ENCODE measurements at regions of chr18 and their contacts with region 1.

Region 1: GRCh38 chr18:63439334-63439733 is 17.1 kb upstream of the VPS4B start:
- DNase-seq: peak; percentile 43 to 61
- H3K4me3 ChIP-seq: no peak overlapping the region
- H3K27ac ChIP-seq: no peak overlapping the region
- H3K4me1 ChIP-seq: no peaks in the 10 kb centered on the region
- H3K27me3 ChIP-seq: no peaks in the 10 kb centered on the region
- CTCF ChIP-seq: peak; percentile 13 to 83 (median 70)
- EP300 ChIP-seq: no peak
- POLR2A ChIP-seq: no peak
- RAD21 ChIP-seq: peak; percentile 86

Region 2: DNA sequence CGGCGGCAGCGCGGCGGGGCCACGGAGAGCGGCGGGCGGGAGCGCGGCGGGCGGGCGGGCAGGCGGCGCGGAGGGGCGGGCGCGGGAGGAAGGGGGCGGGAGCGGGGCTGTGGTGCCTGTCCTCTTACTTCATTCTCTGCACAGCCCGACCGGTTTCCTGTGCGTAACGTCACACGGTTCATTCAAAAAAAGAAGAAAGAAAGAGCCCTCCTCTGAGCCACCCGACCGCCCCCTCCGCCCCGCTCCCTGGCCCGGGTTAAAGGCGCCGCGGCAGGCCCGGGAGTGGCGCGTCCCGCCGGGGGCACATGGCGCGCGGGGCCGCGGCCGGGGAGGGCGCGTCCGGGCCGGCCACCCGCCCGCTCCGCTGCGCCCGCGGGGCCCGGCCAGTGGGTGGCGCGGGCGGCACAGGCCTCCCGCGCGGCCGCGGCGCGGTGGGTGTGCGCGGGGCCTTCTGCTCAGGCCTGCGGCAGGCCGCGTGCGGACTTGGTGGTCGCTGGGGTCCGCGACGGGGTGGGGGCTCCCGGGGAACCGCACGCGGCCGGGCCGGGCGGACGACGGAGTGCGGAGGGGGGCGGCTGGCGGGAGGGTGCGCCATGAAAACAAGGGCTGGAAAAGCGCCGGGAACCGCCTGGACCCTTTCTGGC is 119.2 kb before region 1 on chr18:
- CTCF ChIA-PET with region 1: interaction called, 14 read pairs
- POLR2A ChIA-PET with region 1: no interaction called
- DNase-seq: peak in 1 of 2 experiments; percentile 63
- H3K4me3 ChIP-seq: peak overlapping the region; percentile 43 to 77 (median 62)
- H3K27ac ChIP-seq: no peak overlapping the region
- H3K4me1 ChIP-seq: peaks cover 4 to 10% (median 8%) of the 10 kb centered on the region in 4 experiments; a peak in 4 of 7 replicates
- H3K27me3 ChIP-seq: peaks cover 0 to 37% (median 22%) of the 10 kb centered on the region in 4 experiments; a peak in 6 of 7 replicates
- CTCF ChIP-seq: no peak
- EP300 ChIP-seq: no peak
- POLR2A ChIP-seq: no peak
- RAD21 ChIP-seq: no peak

Region 3: DNA sequence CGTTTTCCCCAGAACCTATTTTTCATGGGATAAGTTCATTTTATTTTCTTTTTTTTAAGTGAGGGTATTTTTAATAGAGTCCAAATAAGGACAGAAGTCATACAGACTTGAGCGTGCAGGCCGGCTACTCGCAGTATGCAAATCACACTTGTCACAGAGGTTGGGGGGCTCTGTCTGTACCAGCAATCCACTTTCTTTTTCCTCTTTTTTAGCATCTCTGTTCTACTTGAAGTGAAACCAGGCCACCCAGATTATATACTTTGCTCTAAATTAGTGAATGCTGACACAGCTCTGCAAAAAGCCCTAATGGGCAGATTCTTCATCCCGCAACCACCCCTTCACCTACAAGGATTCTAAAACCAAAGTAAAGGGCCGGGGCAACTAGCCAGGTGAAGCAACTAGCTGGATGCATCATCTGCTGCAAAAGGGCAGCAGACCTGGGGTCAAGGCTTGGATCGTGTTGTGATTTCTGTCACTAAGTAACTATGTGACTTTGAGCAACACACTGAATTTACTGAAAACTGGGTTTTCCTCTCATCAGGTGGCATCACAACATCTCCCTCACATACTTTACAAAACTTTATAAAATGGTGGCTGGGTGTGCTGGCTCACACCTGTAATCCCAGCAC is 90.7 kb before region 1 on chr18:
- CTCF ChIA-PET with region 1: interaction called, 10 read pairs
- POLR2A ChIA-PET with region 1: no interaction called
- DNase-seq: no peak
- H3K4me3 ChIP-seq: no peak overlapping the region
- H3K27ac ChIP-seq: no peak overlapping the region
- H3K4me1 ChIP-seq: no peaks in the 10 kb centered on the region
- H3K27me3 ChIP-seq: no peaks in the 10 kb centered on the region
- CTCF ChIP-seq: no peak
- EP300 ChIP-seq: no peak
- POLR2A ChIP-seq: no peak
- RAD21 ChIP-seq: no peak

Region 4: GRCh38 chr18:63427558-63427957 is 11.8 kb before region 1 on chr18:
- CTCF ChIA-PET with region 1: interaction called, 12 read pairs
- POLR2A ChIA-PET with region 1: interaction called, 6 read pairs
- DNase-seq: peak in 1 of 2 experiments; percentile 15
- H3K4me3 ChIP-seq: no peak overlapping the region
- H3K27ac ChIP-seq: no peak overlapping the region; the same call in 1 of the 2 replicates
- H3K4me1 ChIP-seq: no peaks in the 10 kb centered on the region
- H3K27me3 ChIP-seq: no peaks in the 10 kb centered on the region
- CTCF ChIP-seq: no peak
- EP300 ChIP-seq: no peak
- POLR2A ChIP-seq: no peak
- RAD21 ChIP-seq: no peak

Region 5: DNA sequence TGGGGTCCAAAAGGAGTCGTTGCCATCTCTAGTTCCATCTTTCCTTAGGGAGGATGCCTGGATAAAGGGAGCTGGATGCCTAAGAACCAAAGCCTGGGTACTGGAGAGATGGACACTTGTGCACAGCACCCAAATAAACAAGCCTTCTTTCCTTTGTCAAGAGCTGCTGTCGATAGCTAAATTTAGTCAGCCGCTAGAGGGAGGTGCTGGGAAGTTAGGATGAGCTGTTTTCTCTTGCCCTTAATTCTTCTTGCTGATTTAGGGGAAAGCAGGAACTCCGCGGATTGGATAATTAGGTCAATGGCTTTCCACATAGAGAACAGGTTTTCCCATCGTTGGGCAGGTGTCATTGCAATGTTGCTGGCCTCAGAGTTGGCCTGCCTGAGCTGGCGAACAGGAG is 72.0 kb after region 1 on chr18:
- CTCF ChIA-PET with region 1: interaction called, 23 read pairs
- POLR2A ChIA-PET with region 1: no interaction called
- DNase-seq: peak; percentile 44 to 68
- H3K4me3 ChIP-seq: peak overlapping the region in 1 of 4 experiments; percentile 20; a peak in 1 of 8 replicates
- H3K27ac ChIP-seq: no peak overlapping the region
- H3K4me1 ChIP-seq: peaks cover 2 to 18% (median 9%) of the 10 kb centered on the region in 4 experiments; a peak in 4 of 7 replicates
- H3K27me3 ChIP-seq: no peaks in the 10 kb centered on the region
- CTCF ChIP-seq: peak in 2 of 3 experiments; percentile 79 to 83; a peak in 3 of 4 replicates
- EP300 ChIP-seq: no peak
- POLR2A ChIP-seq: no peak
- RAD21 ChIP-seq: peak; percentile 48 to 63